Activated naive CD4-positive, alpha-beta T cell treated with anti-CD3 and anti-CD28 coated beads for 36 hours (primary cell): ENCODE measurements at regions of chr20 and their contacts with region 1.

Region 1: DNA sequence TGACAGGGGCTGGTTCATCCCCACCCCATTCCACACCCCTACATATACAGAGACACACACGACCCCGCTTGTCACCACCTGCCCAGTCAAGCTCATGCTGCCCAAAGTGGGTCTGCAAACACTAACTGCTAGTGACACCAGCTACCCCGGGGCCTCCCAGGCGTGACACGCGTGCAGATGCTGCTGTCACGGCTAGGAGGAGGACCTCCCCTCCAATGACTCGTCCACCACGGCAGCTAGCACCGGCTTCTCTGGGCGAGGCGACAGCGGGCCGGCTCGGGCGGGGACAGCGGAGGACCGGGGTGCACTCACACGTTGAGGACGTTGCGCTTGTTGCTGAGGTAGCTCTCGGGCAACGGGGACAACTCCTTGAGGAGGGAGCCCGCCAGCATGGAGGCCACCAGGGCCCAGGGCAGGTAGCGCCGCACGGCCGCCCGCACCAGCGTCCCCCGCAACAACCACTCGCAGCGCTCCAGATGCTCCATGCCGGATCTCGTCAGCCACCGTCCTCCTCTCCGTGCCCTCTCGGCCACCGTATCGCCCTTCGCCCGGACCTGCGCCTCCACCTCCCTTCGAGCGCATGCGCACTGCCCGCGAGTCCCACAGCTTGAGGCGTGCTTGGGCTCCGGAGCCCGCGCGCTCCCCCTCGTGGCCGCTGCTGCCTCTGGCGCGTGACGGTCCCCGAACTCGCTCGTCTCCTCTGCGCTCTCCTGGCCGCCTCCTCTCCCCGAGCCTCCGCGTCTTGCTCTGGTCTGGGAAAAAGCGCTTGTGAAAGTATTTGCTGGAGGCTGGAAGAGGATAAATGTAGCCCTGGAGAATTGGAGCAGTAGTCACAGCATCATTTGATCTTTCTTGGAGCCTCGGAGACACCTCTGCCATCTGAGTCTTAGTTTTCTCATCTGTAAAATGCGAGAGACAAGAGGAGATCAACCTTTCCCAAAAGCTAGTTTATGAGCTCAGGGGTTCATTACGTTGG is at the start of gene FITM2:
- DNase-seq: peak; percentile 97
- H3K4me3 Mint-ChIP-seq: peak within 1 kb of the TSS; percentile 90
- H3K27ac Mint-ChIP-seq: peak within 1 kb of the TSS; percentile 76
- H3K4me1 Mint-ChIP-seq: peaks cover 18% of the 10 kb centered on the region
- H3K27me3 Mint-ChIP-seq: no peaks in the 10 kb centered on the region
- total RNA-seq, gene FITM2: 1.7 to 2.1 TPM

Region 2: DNA sequence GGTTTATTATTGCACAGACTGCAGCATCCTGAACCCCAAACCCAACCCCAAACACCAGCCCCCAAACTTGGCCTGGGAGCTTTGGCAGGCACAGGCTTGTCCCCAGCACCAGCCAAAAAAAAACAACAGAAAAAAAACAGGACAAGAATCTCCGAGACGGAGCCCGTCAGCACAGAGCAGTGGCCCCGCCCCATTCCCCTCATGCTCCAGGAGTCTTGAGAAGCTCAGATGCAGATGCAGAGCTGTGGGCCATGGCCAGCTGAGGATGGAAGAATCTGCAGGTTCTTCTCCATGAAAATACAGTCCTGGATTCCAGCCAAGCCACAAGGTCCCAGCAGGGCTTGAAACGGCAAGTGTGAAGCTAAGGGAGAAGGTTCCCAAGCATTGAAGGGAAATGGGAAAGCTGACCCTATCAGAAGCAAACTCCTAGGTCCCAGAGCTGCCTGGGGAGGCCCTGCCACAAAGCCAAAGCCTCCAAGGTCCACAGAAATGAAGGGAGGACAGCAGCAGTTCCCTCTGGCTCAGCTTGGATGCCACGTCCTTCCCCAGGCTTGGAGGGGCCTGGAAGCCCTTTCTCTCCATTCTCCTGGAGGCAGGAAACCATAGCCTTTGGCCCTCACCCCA is 199.1 kb before region 1 on chr20:
- CTCF ChIA-PET with region 1: interaction called, 4 read pairs
- intact Hi-C with region 1: loop called (anchors 1 kb)
- DNase-seq: no peak
- H3K4me3 Mint-ChIP-seq: no peak overlapping the region
- H3K27ac Mint-ChIP-seq: no peak overlapping the region
- H3K4me1 Mint-ChIP-seq: peaks cover 4% of the 10 kb centered on the region
- H3K27me3 Mint-ChIP-seq: peaks cover 36% of the 10 kb centered on the region

Region 3: GRCh38 chr20:44222633-44223368 is 88.2 kb before region 1 on chr20:
- CTCF ChIA-PET with region 1: interaction called, 377 read pairs
- intact Hi-C with region 1: no loop called
- DNase-seq: peak; percentile 30
- H3K4me3 Mint-ChIP-seq: no peak overlapping the region
- H3K27ac Mint-ChIP-seq: no peak overlapping the region
- H3K4me1 Mint-ChIP-seq: peaks cover 33% of the 10 kb centered on the region
- H3K27me3 Mint-ChIP-seq: no peaks in the 10 kb centered on the region

Region 4: GRCh38 chr20:44388466-44389023 is 77.6 kb after region 1 on chr20:
- CTCF ChIA-PET with region 1: interaction called, 16 read pairs
- intact Hi-C with region 1: loop called (anchors 1 kb)
- DNase-seq: peak; percentile 90
- H3K4me3 Mint-ChIP-seq: peak overlapping the region; percentile 22
- H3K27ac Mint-ChIP-seq: no peak overlapping the region
- H3K4me1 Mint-ChIP-seq: peaks cover 11% of the 10 kb centered on the region
- H3K27me3 Mint-ChIP-seq: peaks cover 3% of the 10 kb centered on the region

Region 5: DNA sequence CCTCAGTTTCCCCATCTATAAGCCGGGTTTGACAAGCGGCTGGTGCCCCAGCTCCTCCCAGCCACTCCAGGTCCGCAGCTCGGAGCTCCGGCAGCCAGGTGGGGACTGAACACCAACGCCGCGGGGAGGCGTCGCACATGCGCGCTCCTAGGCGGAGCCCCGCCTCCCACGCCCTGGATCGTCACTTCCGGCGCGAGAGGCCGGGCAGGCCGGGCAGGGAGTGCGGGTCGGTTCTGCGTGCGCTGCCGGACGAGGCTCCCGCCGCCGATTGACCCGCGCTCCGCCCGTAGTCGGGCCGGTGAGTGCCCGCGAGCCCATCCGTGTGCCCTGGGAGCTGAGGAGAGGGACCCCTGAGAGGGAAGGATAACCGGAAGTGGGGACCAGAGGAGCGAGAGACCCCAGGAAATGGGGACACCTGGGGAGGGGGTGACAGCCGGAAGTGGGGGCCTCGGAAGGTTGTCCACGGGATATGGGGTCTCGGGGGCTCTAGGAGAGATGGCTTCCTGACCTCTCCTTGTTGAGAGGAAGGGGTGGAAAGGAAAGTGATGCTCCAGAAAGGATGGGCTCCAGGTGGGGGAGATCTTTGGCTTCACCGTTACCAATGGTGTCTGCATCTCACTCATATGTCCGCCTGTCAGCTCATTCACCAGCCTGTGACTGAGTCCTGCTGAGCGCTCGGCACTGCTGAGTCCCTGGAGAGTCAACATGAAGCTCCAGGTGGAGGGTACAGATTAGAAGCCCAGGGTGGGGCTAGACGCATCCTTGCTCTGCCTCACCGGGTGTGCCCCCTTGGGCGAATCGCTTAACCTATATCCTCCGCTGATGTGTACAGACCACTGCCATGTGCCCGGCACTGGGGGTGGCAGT is 165.0 kb after region 1 on chr20 and contains the start of gene TTPAL:
- CTCF ChIA-PET with region 1: no interaction called
- intact Hi-C with region 1: loop called (anchors 5 kb)
- DNase-seq: peak; percentile 92
- H3K4me3 Mint-ChIP-seq: peak within 1 kb of the TSS; percentile 95
- H3K27ac Mint-ChIP-seq: peak within 1 kb of the TSS; percentile 96
- H3K4me1 Mint-ChIP-seq: peaks cover 20% of the 10 kb centered on the region
- H3K27me3 Mint-ChIP-seq: no peaks in the 10 kb centered on the region
- total RNA-seq, gene TTPAL: 10.8 to 11.5 TPM

Region 6: DNA sequence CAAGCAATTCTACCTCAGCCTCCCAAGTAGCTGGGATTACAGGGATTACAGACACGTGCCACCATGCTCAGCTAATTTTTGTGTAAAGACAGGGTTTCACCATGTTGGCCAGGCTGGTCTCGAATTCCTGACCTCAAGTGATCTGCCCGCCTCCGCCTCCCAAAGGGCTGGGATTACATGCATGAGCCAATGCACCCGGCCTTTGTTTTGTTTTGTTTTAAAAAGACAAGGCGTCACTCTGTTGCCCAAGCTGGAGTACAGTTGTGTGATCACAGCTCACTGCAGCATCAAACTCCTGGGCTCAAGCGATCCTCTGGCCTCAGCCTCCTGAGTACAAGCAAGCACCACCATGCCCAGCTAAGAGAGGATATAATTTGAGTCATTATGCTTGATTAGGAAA is 205.5 kb after region 1 on chr20:
- CTCF ChIA-PET with region 1: no interaction called
- intact Hi-C with region 1: no loop called
- DNase-seq: no peak
- H3K4me3 Mint-ChIP-seq: no peak overlapping the region
- H3K27ac Mint-ChIP-seq: no peak overlapping the region
- H3K4me1 Mint-ChIP-seq: peaks cover 60% of the 10 kb centered on the region
- H3K27me3 Mint-ChIP-seq: no peaks in the 10 kb centered on the region